Mammary epithelial cell (primary cell): ENCODE measurements at regions of chr1 and their contacts with region 1.

Region 1: GRCh38 chr1:222455188-222455879 is 92.6 kb downstream of the HHIPL2 start:
- DNase-seq: peak; percentile 81
- H3K4me3 ChIP-seq: peak overlapping the region; percentile 2 to 14 (median 10)
- H3K27ac ChIP-seq: peak overlapping the region; percentile 72
- H3K4me1 ChIP-seq: peaks cover 14% of the 10 kb centered on the region
- H3K27me3 ChIP-seq: no peaks in the 10 kb centered on the region
- CTCF ChIP-seq: peak; percentile 97 to 99

Region 2: DNA sequence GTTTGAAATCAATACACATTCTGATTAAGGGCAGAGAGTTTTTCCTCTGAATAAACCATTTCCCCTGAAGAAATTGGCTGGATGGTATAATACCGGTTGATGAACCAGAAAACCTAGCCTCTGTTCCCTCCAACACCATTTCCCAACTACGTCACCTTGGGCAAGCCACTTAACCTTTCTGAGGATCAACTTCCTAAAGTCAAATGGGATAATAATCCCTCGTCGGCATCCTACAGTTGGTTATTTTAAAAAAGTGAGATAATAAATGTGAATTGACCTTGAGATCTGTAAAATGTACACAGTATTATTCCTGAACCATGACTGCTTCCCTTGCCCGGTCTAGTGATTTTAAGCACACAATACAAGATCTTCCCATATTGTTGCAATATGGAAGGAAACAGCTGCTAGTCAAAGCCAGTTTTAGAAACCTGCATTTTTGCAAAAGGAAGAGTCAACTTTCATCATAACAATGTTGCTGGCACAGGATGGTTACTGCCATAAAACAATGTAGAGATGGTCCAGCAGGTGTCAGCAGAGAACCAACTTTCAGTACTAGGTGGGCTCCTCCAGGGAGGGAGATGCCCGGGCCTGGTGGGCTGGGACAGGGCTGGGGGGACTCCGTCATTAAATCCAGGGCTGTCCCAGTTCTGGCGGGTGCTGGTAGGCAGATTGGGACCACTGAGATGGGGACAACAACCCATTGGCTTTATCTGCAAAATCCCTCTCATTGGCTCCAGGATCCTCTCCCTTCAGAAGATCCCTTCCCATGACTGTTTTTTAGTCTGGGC is 1581.3 kb before region 1 on chr1:
- CTCF ChIA-PET with region 1: no interaction called
- dilution Hi-C with region 1: no loop called
- in situ Hi-C with region 1: no loop called
- intact Hi-C with region 1: loop called (anchors 5 kb)
- DNase-seq: no peak
- H3K4me3 ChIP-seq: no peak overlapping the region
- H3K27ac ChIP-seq: no peak overlapping the region
- H3K4me1 ChIP-seq: peaks cover 5% of the 10 kb centered on the region
- H3K27me3 ChIP-seq: peaks cover 19% of the 10 kb centered on the region
- CTCF ChIP-seq: peak; percentile 67 to 71

Region 3: DNA sequence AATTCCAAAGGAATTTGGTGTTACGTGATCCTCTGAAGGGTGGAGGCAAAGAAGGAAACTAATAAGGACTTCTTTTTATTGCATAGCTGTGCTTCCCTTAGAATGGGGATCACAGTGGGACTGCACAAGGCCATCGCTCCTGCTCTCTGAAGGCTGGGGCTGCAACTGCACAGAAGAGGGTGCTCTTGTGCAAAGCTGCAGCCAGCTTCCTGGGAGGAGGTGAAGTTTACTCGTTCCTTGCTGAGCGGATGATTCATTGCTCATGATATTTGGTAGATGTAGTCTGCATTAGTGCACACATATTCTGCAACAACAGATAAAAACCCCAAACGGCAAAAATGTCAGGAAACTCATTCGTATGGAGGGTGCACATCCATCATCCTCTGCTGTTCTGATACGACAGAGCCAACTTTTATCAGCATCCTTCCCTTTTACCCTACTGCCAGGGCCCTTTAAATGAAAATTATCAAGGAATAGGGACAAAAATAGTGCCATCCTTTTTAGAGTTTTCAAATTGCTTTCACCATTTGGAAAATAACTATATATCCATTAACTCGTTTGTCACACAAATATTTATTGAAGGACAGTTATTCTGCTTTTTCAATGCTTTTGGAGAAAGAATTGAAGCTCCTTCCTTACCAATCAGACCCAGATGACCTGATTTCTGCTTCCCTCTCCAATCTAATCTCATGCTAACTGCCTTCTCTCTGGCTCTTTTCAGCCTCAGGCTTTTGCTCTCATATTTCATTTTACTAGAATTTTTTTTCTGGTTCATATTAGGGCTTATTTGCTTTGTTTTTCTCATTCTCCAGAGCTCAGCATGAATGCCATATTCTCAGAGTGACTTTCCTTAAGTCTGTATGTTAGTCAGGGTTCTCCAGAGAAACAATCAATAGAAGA is 977.0 kb before region 1 on chr1:
- CTCF ChIA-PET with region 1: no interaction called
- dilution Hi-C with region 1: no loop called
- in situ Hi-C with region 1: loop called in 1 of 2 experiments (anchors 10 kb)
- intact Hi-C with region 1: loop called (anchors 1 kb)
- DNase-seq: peak; percentile 79
- H3K4me3 ChIP-seq: no peak overlapping the region
- H3K27ac ChIP-seq: no peak overlapping the region
- H3K4me1 ChIP-seq: peaks cover 13% of the 10 kb centered on the region
- H3K27me3 ChIP-seq: no peaks in the 10 kb centered on the region
- CTCF ChIP-seq: peak; percentile 88 to 98

Region 4: GRCh38 chr1:221979461-221980032 is 475.8 kb before region 1 on chr1:
- CTCF ChIA-PET with region 1: interaction called, 13 read pairs
- dilution Hi-C with region 1: no loop called
- in situ Hi-C with region 1: no loop called
- intact Hi-C with region 1: loop called (anchors 1 kb)
- DNase-seq: no peak
- H3K4me3 ChIP-seq: no peak overlapping the region
- H3K27ac ChIP-seq: no peak overlapping the region
- H3K4me1 ChIP-seq: peaks cover 14% of the 10 kb centered on the region
- H3K27me3 ChIP-seq: no peaks in the 10 kb centered on the region
- CTCF ChIP-seq: peak; percentile 36 to 41

Region 5: GRCh38 chr1:222124602-222125001 is 330.7 kb before region 1 on chr1:
- CTCF ChIA-PET with region 1: interaction called, 4 read pairs
- dilution Hi-C with region 1: no loop called
- in situ Hi-C with region 1: no loop called
- intact Hi-C with region 1: loop called (anchors 1 kb)
- DNase-seq: no peak
- H3K4me3 ChIP-seq: no peak overlapping the region
- H3K27ac ChIP-seq: no peak overlapping the region
- H3K4me1 ChIP-seq: no peaks in the 10 kb centered on the region
- H3K27me3 ChIP-seq: no peaks in the 10 kb centered on the region
- CTCF ChIP-seq: peak; percentile 30 to 71

Region 6: GRCh38 chr1:222424826-222425225 is 30.5 kb before region 1 on chr1:
- CTCF ChIA-PET with region 1: no interaction called
- dilution Hi-C with region 1: no loop called
- in situ Hi-C with region 1: no loop called
- intact Hi-C with region 1: no loop called
- DNase-seq: no peak
- H3K4me3 ChIP-seq: no peak overlapping the region
- H3K27ac ChIP-seq: no peak overlapping the region
- H3K4me1 ChIP-seq: no peaks in the 10 kb centered on the region
- H3K27me3 ChIP-seq: no peaks in the 10 kb centered on the region
- CTCF ChIP-seq: no peak